ENCODE measurements at regions of chr14 and their contacts with region 1.

Region 1: DNA sequence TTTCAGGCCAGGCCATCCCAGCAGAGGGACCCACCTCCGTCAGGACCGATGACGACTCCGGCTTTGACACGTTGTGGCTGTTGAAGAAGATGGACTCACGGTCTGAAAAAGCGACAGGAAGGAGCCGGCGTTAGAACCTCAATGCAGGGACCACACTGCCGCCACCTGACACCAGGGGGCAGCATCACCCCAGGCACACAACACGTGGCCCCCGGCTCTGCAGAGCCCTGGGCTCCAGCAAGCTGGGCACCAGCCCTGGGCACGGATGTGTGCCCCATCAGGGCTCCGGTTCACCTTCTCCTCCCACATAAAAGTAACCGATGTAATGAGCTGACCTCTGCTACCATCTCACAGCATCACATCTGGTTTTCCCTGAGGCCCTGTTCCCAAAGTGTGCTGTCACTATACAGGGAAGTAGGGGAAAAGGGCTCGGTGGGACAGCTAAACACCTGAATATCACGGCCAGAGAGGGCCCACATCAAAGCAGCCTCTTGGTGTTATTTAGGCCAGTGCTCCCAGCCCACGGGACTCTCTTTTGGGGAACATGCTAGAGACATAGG is 29.0 kb downstream of the CHGA start:
- DNase-seq: peak; percentile 47 to 96
- H3K4me3 ChIP-seq: no peak overlapping the region
- H3K27ac ChIP-seq: no peak overlapping the region
- H3K4me1 ChIP-seq: peaks cover 0 to 3% (median 0%) of the 10 kb centered on the region in 4 experiments; a peak in 1 of 7 replicates
- H3K27me3 ChIP-seq: no peaks in the 10 kb centered on the region
- CTCF ChIP-seq: peak; percentile 90 to 96 (median 93)
- EP300 ChIP-seq: no peak
- POLR2A ChIP-seq: no peak
- RAD21 ChIP-seq: peak; percentile 93

Region 2: DNA sequence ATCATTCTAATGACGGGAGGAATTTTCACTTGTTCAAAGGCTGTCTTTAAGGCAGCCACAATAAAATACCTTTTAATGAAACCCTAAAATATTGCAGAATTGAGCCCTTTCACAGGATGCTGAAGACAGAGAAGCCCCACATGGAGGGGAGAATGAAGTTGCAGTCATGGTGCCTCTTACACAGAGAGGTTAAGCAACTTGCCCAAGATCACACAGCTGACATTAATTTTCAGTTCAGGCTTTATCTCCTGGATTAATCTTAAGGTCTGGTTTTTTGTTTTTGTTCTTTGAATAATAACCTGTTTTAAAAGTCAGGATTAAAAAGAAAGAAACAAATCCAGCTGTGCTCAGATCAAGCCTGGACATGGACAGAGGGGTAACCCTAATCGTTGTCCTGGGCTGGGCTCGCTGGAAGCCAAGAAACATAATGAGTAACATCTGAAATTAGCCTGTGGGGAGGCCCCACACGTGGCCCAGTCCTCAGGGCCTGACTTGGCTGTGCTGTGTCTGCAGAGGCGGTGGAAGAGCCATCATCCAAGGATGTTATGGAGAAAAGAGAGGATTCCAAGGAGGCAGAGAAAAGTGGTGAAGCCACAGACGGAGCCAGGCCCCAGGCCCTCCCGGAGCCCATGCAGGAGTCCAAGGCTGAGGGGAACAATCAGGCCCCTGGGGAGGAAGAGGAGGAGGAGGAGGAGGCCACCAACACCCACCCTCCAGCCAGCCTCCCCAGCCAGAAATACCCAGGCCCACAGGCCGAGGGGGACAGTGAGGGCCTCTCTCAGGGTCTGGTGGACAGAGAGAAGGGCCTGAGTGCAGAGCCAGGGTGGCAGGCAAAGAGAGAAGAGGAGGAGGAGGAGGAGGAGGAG is 21.0 kb before region 1 on chr14:
- CTCF ChIA-PET with region 1: interaction called, 12 read pairs
- POLR2A ChIA-PET with region 1: interaction called, 3 read pairs
- DNase-seq: no peak
- H3K4me3 ChIP-seq: no peak overlapping the region
- H3K27ac ChIP-seq: no peak overlapping the region
- H3K4me1 ChIP-seq: no peaks in the 10 kb centered on the region
- H3K27me3 ChIP-seq: no peaks in the 10 kb centered on the region; a peak in 1 of 7 replicates
- CTCF ChIP-seq: no peak
- EP300 ChIP-seq: no peak
- POLR2A ChIP-seq: no peak
- RAD21 ChIP-seq: no peak

Region 3: DNA sequence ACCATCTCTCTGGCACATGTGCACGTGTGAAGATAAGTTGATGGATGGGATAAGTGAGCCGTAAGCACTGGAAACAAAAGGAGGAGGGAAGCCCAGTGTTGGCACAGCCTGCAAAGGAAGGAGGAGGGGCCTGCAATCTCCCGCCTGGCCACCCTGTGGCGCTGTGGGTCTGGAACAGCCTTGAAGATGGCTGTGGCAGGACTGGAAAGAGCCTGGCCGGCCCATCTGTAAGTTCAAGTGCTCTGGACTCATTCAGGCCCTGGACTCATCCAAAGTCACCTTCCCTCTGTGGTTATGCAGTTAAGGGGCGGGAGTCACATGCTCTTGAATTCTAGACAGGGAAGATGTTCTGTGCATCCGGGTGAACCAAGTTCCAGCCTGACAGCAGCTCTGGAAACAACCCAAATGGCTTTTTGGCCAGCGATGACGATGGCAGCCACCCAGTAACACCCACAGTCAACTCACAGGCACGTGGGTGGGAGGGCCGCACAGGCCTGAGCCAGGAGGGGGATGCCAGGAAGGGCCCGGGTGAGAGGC is 21.3 kb after region 1 on chr14:
- CTCF ChIA-PET with region 1: interaction called, 32 read pairs
- POLR2A ChIA-PET with region 1: interaction called, 3 read pairs
- DNase-seq: peak; percentile 73 to 100
- H3K4me3 ChIP-seq: no peak overlapping the region
- H3K27ac ChIP-seq: no peak overlapping the region
- H3K4me1 ChIP-seq: peaks cover 0 to 16% (median 8%) of the 10 kb centered on the region in 4 experiments; a peak in 5 of 7 replicates
- H3K27me3 ChIP-seq: no peaks in the 10 kb centered on the region
- CTCF ChIP-seq: peak; percentile 92 to 98 (median 98)
- EP300 ChIP-seq: peak in 1 of 2 experiments; percentile 95; a peak in 1 of 3 replicates
- POLR2A ChIP-seq: no peak
- RAD21 ChIP-seq: peak; percentile 92 to 93

Region 4: DNA sequence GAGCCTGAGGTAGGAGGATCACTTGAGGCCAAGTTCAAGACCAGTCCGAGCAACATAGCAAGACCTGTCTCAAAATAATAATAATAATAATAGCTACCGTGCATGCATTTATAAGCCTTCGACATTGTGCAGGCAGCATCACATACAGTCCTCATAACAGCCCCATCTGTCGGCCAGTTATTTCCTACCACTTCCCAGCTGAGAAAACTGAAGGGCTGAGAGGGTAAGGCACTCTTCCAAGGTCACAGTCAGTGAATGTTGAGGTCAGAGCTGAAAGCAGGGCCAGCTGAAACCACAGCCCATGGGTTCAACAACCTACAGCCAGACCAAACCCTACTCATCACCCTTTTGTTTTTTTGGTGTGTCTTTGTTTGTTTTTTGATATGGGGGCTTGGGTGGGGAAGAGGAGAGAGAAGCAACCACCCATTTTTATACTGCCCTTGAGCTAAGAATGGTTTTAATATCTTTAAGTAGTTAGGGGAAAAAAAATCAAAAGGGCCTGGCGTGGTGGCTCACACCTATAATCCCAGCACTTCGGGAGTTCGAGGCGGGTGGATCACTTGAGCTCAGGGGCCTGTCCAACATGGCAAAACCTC is 180.6 kb after region 1 on chr14:
- CTCF ChIA-PET with region 1: interaction called, 36 read pairs
- POLR2A ChIA-PET with region 1: no interaction called
- DNase-seq: no peak
- H3K4me3 ChIP-seq: no peak overlapping the region
- H3K27ac ChIP-seq: no peak overlapping the region
- H3K4me1 ChIP-seq: no peaks in the 10 kb centered on the region; a peak in 1 of 7 replicates
- H3K27me3 ChIP-seq: no peaks in the 10 kb centered on the region
- CTCF ChIP-seq: peak; percentile 42 to 66 (median 48); a peak in 3 of 4 replicates
- EP300 ChIP-seq: no peak
- POLR2A ChIP-seq: no peak
- RAD21 ChIP-seq: peak; percentile 15 to 31; a peak in 1 of 4 replicates

Region 5: DNA sequence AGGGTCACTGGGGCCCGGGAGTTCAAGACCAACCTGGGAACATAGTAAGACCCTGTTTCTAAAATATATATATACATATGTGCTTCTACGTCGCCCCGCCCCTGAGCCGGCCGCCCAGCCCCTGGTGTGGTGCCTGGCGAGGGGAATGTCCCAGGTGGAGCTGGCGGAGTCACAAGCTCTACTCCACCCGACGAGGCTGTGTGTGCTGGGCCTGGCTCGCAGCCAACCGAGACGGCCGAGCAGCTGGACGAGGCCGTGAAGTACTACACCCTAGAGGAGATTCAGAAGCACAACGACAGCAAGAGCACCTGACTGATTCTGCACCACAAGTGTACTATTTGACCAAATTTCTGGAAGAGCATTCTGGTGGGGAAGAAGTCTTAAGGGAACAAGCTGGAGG is 185.9 kb after region 1 on chr14:
- CTCF ChIA-PET with region 1: interaction called, 36 read pairs
- POLR2A ChIA-PET with region 1: interaction called, 4 read pairs
- DNase-seq: no peak
- H3K4me3 ChIP-seq: no peak overlapping the region
- H3K27ac ChIP-seq: no peak overlapping the region
- H3K4me1 ChIP-seq: no peaks in the 10 kb centered on the region
- H3K27me3 ChIP-seq: no peaks in the 10 kb centered on the region
- CTCF ChIP-seq: peak in 2 of 3 experiments; percentile 18 to 24; a peak in 2 of 4 replicates
- EP300 ChIP-seq: no peak
- POLR2A ChIP-seq: no peak
- RAD21 ChIP-seq: peak in 1 of 2 experiments; percentile 33; a peak in 2 of 4 replicates

Region 6: GRCh38 chr14:93146119-93146518 is 194.1 kb after region 1 on chr14:
- CTCF ChIA-PET with region 1: interaction called, 25 read pairs
- POLR2A ChIA-PET with region 1: interaction called, 4 read pairs
- DNase-seq: no peak
- H3K4me3 ChIP-seq: no peak overlapping the region
- H3K27ac ChIP-seq: no peak overlapping the region
- H3K4me1 ChIP-seq: 0 out of 7 replicates have a peak, but pooled peaks cover 0 to 3% (median 0%) of the 10 kb centered on the region in 4 experiments
- H3K27me3 ChIP-seq: no peaks in the 10 kb centered on the region; a peak in 1 of 7 replicates
- CTCF ChIP-seq: no peak
- EP300 ChIP-seq: no peak
- POLR2A ChIP-seq: no peak
- RAD21 ChIP-seq: no peak

Region 7: DNA sequence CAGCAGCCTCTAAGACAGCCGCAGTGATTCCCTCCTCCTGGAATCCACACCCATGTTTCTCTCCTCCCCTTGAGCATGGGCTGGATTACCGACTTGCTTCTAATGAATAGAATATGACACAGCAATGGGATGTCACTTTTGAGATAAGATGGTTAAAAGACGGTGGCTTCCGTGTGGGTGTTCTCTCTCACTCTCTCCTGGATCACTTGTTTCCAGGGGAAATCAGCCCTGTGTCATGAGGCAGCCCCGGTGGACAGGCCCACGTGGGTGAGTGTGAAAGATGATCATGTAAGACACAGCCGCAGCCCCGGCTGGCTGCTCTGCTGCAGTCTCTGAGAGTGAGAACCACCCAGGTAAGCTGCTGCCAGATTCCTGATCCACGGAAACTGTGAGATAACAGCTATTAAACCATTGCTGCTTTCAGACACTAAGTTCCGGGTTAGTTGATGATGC is 222.0 kb after region 1 on chr14:
- CTCF ChIA-PET with region 1: interaction called, 43 read pairs
- POLR2A ChIA-PET with region 1: no interaction called
- DNase-seq: no peak
- H3K4me3 ChIP-seq: no peak overlapping the region
- H3K27ac ChIP-seq: no peak overlapping the region
- H3K4me1 ChIP-seq: no peaks in the 10 kb centered on the region
- H3K27me3 ChIP-seq: no peaks in the 10 kb centered on the region; a peak in 1 of 7 replicates
- CTCF ChIP-seq: no peak
- EP300 ChIP-seq: no peak
- POLR2A ChIP-seq: no peak
- RAD21 ChIP-seq: no peak